ENCODE measurements at regions of chr1 and their contacts with region 1.

Region 1: GRCh38 chr1:18913065-18913835 is 10.9 kb upstream of the ALDH4A1 start:
- DNase-seq: peak; percentile 31 to 80 (median 63)
- ATAC-seq: peak; percentile 73 to 89 (median 80)
- H3K4me3 ChIP-seq: no peak overlapping the region
- H3K4me3 Mint-ChIP-seq: no peak overlapping the region
- H3K27ac ChIP-seq: peak overlapping the region; percentile 4
- H3K27ac Mint-ChIP-seq: peak overlapping the region; percentile 67 to 73
- H3K4me1 ChIP-seq: peaks cover 0 to 9% of the 10 kb centered on the region in 2 experiments
- H3K4me1 Mint-ChIP-seq: peaks cover 12 to 20% (median 13%) of the 10 kb centered on the region in 3 donors
- H3K27me3 ChIP-seq: no peaks in the 10 kb centered on the region
- H3K27me3 Mint-ChIP-seq: no peaks in the 10 kb centered on the region

Region 2: DNA sequence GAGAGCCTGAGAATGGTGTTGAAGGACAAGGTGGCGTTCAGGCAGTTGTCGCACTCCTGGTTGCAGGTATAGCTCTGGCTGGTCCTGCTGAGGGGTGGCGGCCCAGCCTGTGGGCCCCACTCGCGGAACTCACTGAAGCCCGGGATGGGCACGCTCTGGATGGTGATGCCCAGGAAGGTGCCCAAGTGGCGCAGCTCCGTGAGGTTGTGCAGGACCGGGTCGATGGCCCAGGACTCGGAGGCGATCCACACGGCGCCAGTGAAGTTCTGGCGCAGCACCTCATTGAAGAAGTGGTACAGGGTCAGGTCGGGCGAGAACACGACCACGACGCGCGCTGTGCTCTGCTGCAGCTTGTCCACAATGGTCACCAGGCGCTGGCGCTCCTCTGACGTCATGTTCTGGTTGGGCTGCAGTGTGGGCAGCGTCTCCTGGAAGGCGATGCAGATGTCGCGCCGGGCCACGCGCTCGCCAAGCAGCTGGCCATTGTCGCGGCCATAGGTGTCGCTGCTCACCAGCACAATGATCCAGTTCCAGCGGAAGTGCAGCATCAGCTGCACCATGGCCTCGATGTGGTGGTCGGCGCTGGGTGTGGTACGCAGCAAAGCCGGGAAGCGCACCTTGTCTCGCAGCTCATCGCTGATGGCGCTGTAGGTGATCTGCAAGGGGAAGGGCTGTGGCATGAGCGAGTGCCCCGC is 58.8 kb before region 1 on chr1:
- CTCF ChIA-PET with region 1: no interaction called
- POLR2A ChIA-PET with region 1: no interaction called
- DNase-seq: no peak
- ATAC-seq: no peak
- H3K4me3 ChIP-seq: no peak overlapping the region
- H3K4me3 Mint-ChIP-seq: no peak overlapping the region
- H3K27ac ChIP-seq: no peak overlapping the region
- H3K27ac Mint-ChIP-seq: no peak overlapping the region
- H3K4me1 ChIP-seq: no peaks in the 10 kb centered on the region
- H3K4me1 Mint-ChIP-seq: no peaks in the 10 kb centered on the region
- H3K27me3 ChIP-seq: peaks cover 0 to 34% of the 10 kb centered on the region in 2 experiments
- H3K27me3 Mint-ChIP-seq: peaks cover 11 to 12% of the 10 kb centered on the region in 2 donors

Region 3: DNA sequence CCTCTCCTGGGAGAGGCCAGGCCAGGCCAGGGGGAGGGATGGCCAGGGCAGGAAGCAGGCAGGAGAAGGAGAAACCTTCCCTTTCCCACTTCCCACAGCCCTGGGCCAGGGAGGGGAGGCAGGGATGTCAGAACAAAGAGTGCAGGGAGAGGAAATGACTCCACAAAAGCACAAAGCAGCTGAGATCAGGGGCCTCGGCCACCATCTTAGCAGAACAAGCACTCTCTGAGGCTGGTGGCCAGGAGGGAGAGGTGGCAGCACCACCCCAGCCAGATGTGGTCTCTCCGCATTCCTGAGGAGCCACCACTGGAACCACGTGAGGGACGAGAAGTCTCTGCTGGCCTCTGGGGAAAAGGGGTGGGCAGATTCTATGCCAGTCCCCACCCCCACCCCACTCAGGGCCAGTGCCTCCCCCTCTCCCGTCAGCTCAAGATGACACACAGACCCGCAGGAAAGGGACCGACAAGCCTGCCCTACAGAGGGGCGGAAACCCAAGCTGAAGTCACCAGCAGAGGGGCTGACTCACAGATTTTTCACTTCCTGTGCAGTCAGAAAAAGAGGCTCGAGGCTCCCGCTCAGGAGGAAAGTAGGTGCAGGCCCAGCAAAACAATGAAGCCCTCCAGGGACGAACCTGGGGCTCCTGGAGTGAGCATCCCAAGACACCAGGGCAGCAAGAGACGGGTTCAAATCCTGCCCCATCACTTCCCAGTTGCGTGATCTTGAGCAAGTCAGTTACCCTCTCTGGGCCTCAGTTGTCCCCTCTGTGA is 13.2 kb after region 1 on chr1:
- CTCF ChIA-PET with region 1: interaction called, 9 to 21 read pairs
- POLR2A ChIA-PET with region 1: no interaction called
- DNase-seq: peak; percentile 60 to 88 (median 74)
- ATAC-seq: peak; percentile 76 to 84 (median 83)
- H3K4me3 ChIP-seq: peak overlapping the region; percentile 43 to 64
- H3K4me3 Mint-ChIP-seq: peak overlapping the region; percentile 79 to 87 (median 85)
- H3K27ac ChIP-seq: peak overlapping the region; percentile 90
- H3K27ac Mint-ChIP-seq: peak overlapping the region; percentile 97 to 98
- H3K4me1 ChIP-seq: peaks cover 38 to 99% of the 10 kb centered on the region in 2 experiments
- H3K4me1 Mint-ChIP-seq: peaks cover 82 to 93% (median 92%) of the 10 kb centered on the region in 3 donors
- H3K27me3 ChIP-seq: no peaks in the 10 kb centered on the region
- H3K27me3 Mint-ChIP-seq: no peaks in the 10 kb centered on the region

Region 4: GRCh38 chr1:18941221-18942141 is 28.2 kb after region 1 on chr1:
- CTCF ChIA-PET with region 1: no interaction called
- POLR2A ChIA-PET with region 1: no interaction called
- DNase-seq: no peak
- ATAC-seq: no peak
- H3K4me3 ChIP-seq: no peak overlapping the region
- H3K4me3 Mint-ChIP-seq: no peak overlapping the region
- H3K27ac ChIP-seq: no peak overlapping the region
- H3K27ac Mint-ChIP-seq: peak overlapping the region in 1 of 2 donors; percentile 60
- H3K4me1 ChIP-seq: peaks cover 5 to 100% of the 10 kb centered on the region in 2 experiments
- H3K4me1 Mint-ChIP-seq: peaks cover 72 to 86% (median 77%) of the 10 kb centered on the region in 3 donors
- H3K27me3 ChIP-seq: no peaks in the 10 kb centered on the region
- H3K27me3 Mint-ChIP-seq: no peaks in the 10 kb centered on the region

Region 5: GRCh38 chr1:18972531-18972930 is 59.3 kb after region 1 on chr1:
- CTCF ChIA-PET with region 1: interaction called in 1 of 2 experiments, 26 read pairs
- POLR2A ChIA-PET with region 1: no interaction called
- DNase-seq: peak in 16 of 35 experiments; percentile 9 to 71 (median 30)
- ATAC-seq: peak; percentile 20 to 64 (median 52)
- H3K4me3 ChIP-seq: no peak overlapping the region
- H3K4me3 Mint-ChIP-seq: no peak overlapping the region
- H3K27ac ChIP-seq: no peak overlapping the region
- H3K27ac Mint-ChIP-seq: no peak overlapping the region
- H3K4me1 ChIP-seq: no peaks in the 10 kb centered on the region
- H3K4me1 Mint-ChIP-seq: peaks cover 0 to 5% (median 4%) of the 10 kb centered on the region in 3 donors
- H3K27me3 ChIP-seq: peaks cover 0 to 12% of the 10 kb centered on the region in 2 experiments
- H3K27me3 Mint-ChIP-seq: peaks cover 8 to 18% of the 10 kb centered on the region in 2 donors

Region 6: DNA sequence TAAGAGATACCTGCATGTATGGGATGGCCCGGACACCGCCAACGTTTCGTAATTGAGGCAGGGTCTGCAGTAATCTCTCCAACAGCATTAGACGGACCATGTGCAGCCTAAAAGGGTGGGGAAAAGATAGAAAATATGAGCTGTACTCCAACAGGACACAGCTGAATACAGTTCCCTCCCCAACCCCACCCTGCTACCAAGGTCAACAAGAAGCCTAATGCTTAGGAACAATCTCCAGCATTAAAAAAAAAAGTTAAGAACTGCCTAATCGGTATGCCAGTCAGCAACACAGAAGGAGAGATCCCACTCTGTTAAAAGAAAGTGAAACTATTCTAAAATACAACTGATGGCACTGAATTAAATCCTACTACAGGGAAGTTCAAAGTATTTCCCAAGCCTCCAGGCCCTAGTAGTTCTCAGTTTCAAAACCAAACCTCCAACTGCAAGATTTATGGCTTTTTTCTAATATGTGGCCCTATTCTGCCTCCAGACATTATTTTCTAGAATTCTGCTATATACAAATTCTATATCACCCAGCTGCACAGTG is 215.8 kb after region 1 on chr1:
- CTCF ChIA-PET with region 1: interaction called in 1 of 2 experiments, 13 read pairs
- POLR2A ChIA-PET with region 1: no interaction called
- DNase-seq: no peak
- ATAC-seq: no peak
- H3K4me3 ChIP-seq: no peak overlapping the region
- H3K4me3 Mint-ChIP-seq: no peak overlapping the region
- H3K27ac ChIP-seq: no peak overlapping the region
- H3K27ac Mint-ChIP-seq: peak overlapping the region in 1 of 2 donors; percentile 45
- H3K4me1 ChIP-seq: peaks cover 0 to 6% of the 10 kb centered on the region in 2 experiments
- H3K4me1 Mint-ChIP-seq: peaks cover 12 to 18% (median 16%) of the 10 kb centered on the region in 3 donors
- H3K27me3 ChIP-seq: no peaks in the 10 kb centered on the region
- H3K27me3 Mint-ChIP-seq: no peaks in the 10 kb centered on the region

Measured in T-cell (primary cell).